ENCODE measurements at regions of chr11 and their contacts with region 1.

Region 1: DNA sequence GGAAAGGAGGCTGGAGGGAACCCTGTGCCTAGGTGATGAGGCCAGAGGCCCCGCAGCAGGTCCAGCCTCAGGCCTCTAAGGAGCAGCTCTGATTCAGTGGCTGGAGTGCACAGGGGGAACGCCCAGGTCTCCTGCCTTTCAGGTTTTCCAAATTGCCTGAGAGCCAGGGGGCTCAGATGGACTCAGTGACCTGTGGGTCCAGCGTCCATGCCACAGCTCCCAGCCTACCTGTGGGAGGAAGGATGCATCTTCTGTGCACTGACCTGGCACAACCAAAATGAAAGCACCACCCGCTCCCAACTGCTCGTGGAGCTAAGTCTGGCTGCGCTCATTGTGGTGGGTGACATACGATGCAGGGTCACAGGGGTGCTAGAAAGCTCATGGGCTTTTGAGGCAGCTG is 82.8 kb downstream of the FEZ1 start:
- DNase-seq: no peak
- H3K4me3 Mint-ChIP-seq: no peak overlapping the region
- H3K27ac Mint-ChIP-seq: no peak overlapping the region
- H3K4me1 Mint-ChIP-seq: no peaks in the 10 kb centered on the region
- H3K27me3 Mint-ChIP-seq: peaks cover 31% of the 10 kb centered on the region
- CTCF ChIP-seq: no peak

Region 2: DNA sequence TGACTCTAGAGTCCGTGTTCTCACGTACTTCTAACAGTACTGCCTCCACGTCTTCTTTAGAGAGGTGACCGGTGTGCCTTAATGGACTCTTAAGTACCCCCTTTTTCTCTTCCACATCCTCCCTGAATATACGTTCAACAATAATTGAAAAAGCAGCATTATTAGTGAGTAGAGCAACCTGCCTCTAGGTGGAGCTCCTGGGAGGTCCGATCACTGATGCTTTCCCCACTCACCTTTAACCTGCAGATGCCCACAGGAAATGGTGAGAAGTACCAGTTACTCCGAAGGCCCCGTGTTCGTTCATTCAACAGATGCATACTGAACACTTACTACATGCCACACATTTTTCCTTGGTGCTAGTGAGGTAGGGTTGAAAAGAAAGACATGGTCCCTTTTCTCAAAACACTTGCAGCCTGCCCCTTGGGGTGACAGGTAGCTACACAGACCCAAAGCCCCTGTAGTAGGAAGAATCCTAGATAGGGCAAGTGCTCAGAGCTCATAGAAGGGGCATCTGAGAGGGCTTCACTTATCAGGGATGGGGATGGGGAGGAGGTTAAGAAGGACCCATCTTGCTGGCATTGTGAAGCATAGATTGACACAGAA is 10.1 kb after region 1 on chr11:
- CTCF ChIA-PET with region 1: interaction called, 29 read pairs
- POLR2A ChIA-PET with region 1: no interaction called
- intact Hi-C with region 1: no loop called
- DNase-seq: peak; percentile 28
- H3K4me3 Mint-ChIP-seq: no peak overlapping the region
- H3K27ac Mint-ChIP-seq: no peak overlapping the region
- H3K4me1 Mint-ChIP-seq: no peaks in the 10 kb centered on the region
- H3K27me3 Mint-ChIP-seq: peaks cover 49% of the 10 kb centered on the region
- CTCF ChIP-seq: peak; percentile 37

Measured in MCF 10A (cell line).